GM12878 (cell line): ENCODE measurements at regions of chr1 and their contacts with region 1.

Region 1: GRCh38 chr1:247487057-247487456 is 29.2 kb upstream of the OR2B11 start:
- DNase-seq: peak; percentile 28
- ATAC-seq: peak; percentile 97
- H3K4me3 ChIP-seq: no peak overlapping the region
- H3K27ac ChIP-seq: no peak overlapping the region
- H3K4me1 ChIP-seq: no peaks in the 10 kb centered on the region
- H3K27me3 ChIP-seq: peaks cover 0 to under 1% of the 10 kb centered on the region in 2 experiments; a peak in 2 of 4 replicates
- CTCF ChIP-seq: peak; percentile 58 to 79 (median 65)
- EP300 ChIP-seq: no peak
- POLR2A ChIP-seq: no peak
- RAD21 ChIP-seq: peak; percentile 99

Region 2: DNA sequence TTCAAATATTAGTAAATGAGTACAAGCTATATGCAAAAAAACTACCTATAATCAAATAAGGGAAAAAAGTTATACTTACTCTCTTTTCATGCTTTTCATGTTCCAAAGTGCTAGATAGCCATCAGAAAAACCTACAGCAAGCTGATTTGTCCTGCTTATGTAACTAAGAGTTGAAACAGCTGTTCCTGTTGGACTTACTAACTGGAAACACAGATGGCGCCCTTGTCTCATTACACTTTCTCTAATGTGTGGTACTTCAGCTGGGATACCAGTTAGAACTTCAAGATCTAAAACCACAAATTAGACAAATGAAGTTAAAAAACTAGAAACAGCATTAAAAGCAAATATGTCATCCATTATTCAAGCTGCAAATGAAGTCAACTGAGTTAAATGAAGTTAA is 579.6 kb before region 1 on chr1:
- CTCF ChIA-PET with region 1: interaction called, 4 read pairs
- POLR2A ChIA-PET with region 1: no interaction called
- RAD21 ChIA-PET with region 1: interaction called, 3 read pairs
- SMC1A ChIA-PET with region 1: no interaction called
- in situ Hi-C with region 1: no loop called
- intact Hi-C with region 1: loop called (anchors 5 kb)
- DNase-seq: no peak
- ATAC-seq: peak; percentile 76
- H3K4me3 ChIP-seq: no peak overlapping the region
- H3K27ac ChIP-seq: no peak overlapping the region
- H3K4me1 ChIP-seq: no peaks in the 10 kb centered on the region
- H3K27me3 ChIP-seq: no peaks in the 10 kb centered on the region
- CTCF ChIP-seq: peak; percentile 36 to 40 (median 37); a peak in 4 of 6 replicates
- EP300 ChIP-seq: no peak
- POLR2A ChIP-seq: no peak
- RAD21 ChIP-seq: peak; percentile 59

Region 3: DNA sequence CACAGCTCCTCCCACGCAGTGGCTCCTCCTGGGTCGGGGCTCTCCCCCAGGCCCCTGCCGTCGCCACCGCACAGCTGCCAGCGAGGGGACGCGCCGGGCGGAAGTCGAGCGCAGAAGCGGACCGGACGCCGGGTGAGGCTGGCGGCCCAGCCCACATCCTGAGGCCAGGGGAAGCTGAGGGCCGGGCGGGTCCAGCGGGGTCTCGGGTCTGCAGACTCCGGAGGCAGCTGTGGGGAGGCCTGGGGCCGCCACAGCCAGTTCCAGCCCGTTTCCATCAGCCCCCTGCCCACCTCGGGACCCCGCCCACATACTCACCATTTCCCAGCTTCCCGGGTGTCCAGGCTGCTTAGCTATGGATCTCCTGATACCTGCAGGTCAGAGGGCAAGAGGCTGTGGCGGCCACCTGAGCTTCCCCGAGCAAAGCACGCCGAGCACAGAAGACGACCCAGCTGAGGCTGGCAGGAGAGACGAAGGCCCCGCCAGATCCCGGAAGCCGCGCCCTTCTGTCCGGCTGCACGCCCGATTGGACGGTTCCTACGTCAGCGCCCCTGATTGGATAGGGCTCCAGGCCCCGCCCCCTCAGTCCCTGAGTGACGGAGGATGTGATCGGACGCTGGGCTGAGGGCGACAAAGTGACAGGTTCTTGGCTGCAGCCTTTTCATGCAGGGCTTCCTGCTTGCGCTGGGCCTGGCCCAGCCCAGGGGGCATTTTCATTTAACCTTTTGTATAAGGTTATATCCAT is 276.5 kb before region 1 on chr1:
- CTCF ChIA-PET with region 1: interaction called, 6 read pairs
- POLR2A ChIA-PET with region 1: interaction called, 4 read pairs
- RAD21 ChIA-PET with region 1: no interaction called
- SMC1A ChIA-PET with region 1: interaction called, 5 read pairs
- in situ Hi-C with region 1: no loop called
- intact Hi-C with region 1: loop called (anchors 10 kb)
- DNase-seq: peak; percentile 87
- ATAC-seq: peak; percentile 91
- H3K4me3 ChIP-seq: peak overlapping the region; percentile 66
- H3K27ac ChIP-seq: peak overlapping the region; percentile 91
- H3K4me1 ChIP-seq: peaks cover 21% of the 10 kb centered on the region
- H3K27me3 ChIP-seq: no peaks in the 10 kb centered on the region
- CTCF ChIP-seq: no peak
- EP300 ChIP-seq: no peak
- POLR2A ChIP-seq: peak; percentile 97
- RAD21 ChIP-seq: no peak

Region 4: DNA sequence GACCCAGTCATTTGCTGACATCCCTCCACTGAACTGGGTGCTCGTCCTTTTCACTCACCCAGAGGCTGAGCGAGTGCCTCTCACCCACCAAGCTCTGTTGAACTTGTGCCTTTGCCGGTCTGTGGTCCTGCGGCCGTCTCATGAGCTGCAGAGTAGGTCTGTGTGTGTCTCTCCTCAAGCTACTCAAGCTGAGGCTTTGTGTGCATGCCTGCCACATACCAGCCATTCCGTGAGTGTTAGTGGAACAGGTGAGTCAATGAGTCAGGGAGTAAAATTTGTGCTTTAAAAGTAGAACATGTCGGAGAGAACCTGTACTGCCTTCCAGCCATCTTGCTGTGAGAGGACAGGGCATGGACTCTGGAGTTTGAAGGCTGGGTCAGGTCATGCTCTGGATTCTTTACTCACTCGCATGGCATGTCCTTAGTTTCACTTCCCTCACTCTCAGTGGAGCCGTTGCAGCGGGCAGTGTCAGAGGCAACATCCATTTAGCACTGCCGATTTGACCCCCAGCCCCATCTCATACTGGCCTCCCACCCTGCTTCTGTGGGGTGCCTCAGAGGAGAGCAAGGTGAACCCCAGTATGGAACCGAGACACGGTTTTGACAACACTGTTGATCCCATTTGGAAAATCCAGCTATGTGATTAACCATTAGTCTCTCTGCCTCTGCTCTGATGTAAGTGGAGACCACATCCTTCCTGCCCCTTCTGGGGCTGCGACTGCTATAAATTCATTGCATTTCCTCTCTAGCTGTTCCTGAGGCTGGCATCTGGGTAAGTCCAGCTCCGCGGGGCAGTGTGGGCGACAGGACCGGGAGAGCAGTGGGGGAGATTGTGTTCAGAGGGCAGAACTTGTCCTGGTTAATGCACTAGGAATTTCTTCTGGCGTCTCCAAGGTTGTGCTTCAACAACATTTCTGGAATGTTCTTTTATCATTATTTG is 71.4 kb before region 1 on chr1 and contains the start of gene NLRP3:
- CTCF ChIA-PET with region 1: interaction called, 13 read pairs
- POLR2A ChIA-PET with region 1: no interaction called
- RAD21 ChIA-PET with region 1: interaction called, 8 read pairs
- SMC1A ChIA-PET with region 1: interaction called, 22 read pairs
- in situ Hi-C with region 1: no loop called
- intact Hi-C with region 1: no loop called
- DNase-seq: no peak
- ATAC-seq: peak; percentile 84
- H3K4me3 ChIP-seq: no peak within 1 kb of the TSS
- H3K27ac ChIP-seq: no peak within 1 kb of the TSS
- H3K4me1 ChIP-seq: peaks cover 14% of the 10 kb centered on the region
- H3K27me3 ChIP-seq: peaks cover 0 to 10% of the 10 kb centered on the region in 2 experiments; a peak in 2 of 4 replicates
- CTCF ChIP-seq: no peak
- EP300 ChIP-seq: no peak
- POLR2A ChIP-seq: no peak
- RAD21 ChIP-seq: no peak
- polyA plus RNA-seq, gene NLRP3: 2.5 to 3.4 TPM

Region 5: GRCh38 chr1:247431643-247432042 is 55.4 kb before region 1 on chr1:
- CTCF ChIA-PET with region 1: interaction called, 3 read pairs
- POLR2A ChIA-PET with region 1: interaction called, 4 read pairs
- RAD21 ChIA-PET with region 1: interaction called, 6 read pairs
- SMC1A ChIA-PET with region 1: interaction called, 15 read pairs
- in situ Hi-C with region 1: no loop called
- intact Hi-C with region 1: no loop called
- DNase-seq: no peak
- ATAC-seq: no peak
- H3K4me3 ChIP-seq: no peak overlapping the region
- H3K27ac ChIP-seq: no peak overlapping the region
- H3K4me1 ChIP-seq: no peaks in the 10 kb centered on the region
- H3K27me3 ChIP-seq: no peaks in the 10 kb centered on the region
- CTCF ChIP-seq: no peak
- EP300 ChIP-seq: no peak
- POLR2A ChIP-seq: no peak
- RAD21 ChIP-seq: no peak

Region 6: DNA sequence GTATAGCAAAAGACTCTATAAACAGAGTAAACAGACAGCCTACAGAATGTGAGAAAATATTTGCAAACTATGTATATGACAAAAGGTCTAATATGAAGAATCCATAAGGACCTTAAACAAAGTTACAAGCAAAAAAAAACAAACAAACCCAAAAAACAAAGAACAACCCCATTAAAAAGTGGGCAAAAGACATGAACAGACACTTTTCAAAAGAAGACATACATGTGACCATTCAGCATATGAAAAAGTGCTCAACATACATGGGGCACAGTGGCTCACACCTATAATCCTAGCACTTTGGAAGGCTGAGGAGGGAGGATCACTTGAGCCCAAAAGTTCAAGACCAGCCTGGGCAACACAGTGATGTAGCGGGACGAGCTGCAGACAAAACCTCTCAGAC is 11.3 kb before region 1 on chr1:
- CTCF ChIA-PET with region 1: interaction called, 13 read pairs
- POLR2A ChIA-PET with region 1: interaction called, 4 read pairs
- RAD21 ChIA-PET with region 1: interaction called, 3 read pairs
- SMC1A ChIA-PET with region 1: interaction called, 11 read pairs
- in situ Hi-C with region 1: no loop called
- intact Hi-C with region 1: no loop called
- DNase-seq: no peak
- ATAC-seq: no peak; the same call in 2 of the 3 replicates
- H3K4me3 ChIP-seq: no peak overlapping the region
- H3K27ac ChIP-seq: peak overlapping the region; percentile 24; the same call in 1 of the 2 replicates
- H3K4me1 ChIP-seq: peaks cover 10% of the 10 kb centered on the region
- H3K27me3 ChIP-seq: no peaks in the 10 kb centered on the region
- CTCF ChIP-seq: no peak
- EP300 ChIP-seq: no peak
- POLR2A ChIP-seq: no peak
- RAD21 ChIP-seq: no peak